ENCODE measurements at regions of chr1 and their contacts with region 1.

Region 1: DNA sequence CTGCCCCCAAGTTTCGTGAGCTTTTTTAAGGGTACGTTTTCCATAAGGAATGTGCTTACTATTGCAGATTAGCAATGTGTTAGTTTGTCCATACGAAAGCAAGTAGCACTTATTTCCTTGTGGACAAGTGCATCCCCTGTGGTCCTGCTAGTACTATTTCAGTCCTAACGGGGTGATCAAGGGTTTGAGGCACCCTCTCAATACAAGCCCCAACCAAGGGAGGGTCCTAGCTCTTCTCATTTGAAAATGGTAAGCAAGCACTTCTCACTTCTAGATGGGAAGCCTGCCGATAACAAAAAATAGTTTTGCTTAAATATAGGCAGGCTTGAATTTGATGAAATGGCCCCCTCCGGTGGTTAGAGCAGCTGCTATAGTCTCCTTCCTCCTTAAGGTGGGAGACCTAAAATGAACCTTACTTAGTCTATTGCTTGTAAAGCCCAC is 64.0 kb upstream of the HMCN1 start:
- DNase-seq: peak; percentile 69
- H3K4me3 Mint-ChIP-seq: no peak overlapping the region
- H3K27ac Mint-ChIP-seq: no peak overlapping the region
- H3K4me1 Mint-ChIP-seq: no peaks in the 10 kb centered on the region
- H3K27me3 Mint-ChIP-seq: no peaks in the 10 kb centered on the region
- CTCF ChIP-seq: peak; percentile 78

Region 2: GRCh38 chr1:185170291-185170848 is 499.8 kb before region 1 on chr1:
- CTCF ChIA-PET with region 1: interaction called, 13 read pairs
- POLR2A ChIA-PET with region 1: no interaction called
- intact Hi-C with region 1: loop called (anchors 2 kb)
- DNase-seq: peak; percentile 84
- H3K4me3 Mint-ChIP-seq: no peak overlapping the region
- H3K27ac Mint-ChIP-seq: no peak overlapping the region
- H3K4me1 Mint-ChIP-seq: no peaks in the 10 kb centered on the region
- H3K27me3 Mint-ChIP-seq: no peaks in the 10 kb centered on the region
- CTCF ChIP-seq: peak; percentile 80

Region 3: DNA sequence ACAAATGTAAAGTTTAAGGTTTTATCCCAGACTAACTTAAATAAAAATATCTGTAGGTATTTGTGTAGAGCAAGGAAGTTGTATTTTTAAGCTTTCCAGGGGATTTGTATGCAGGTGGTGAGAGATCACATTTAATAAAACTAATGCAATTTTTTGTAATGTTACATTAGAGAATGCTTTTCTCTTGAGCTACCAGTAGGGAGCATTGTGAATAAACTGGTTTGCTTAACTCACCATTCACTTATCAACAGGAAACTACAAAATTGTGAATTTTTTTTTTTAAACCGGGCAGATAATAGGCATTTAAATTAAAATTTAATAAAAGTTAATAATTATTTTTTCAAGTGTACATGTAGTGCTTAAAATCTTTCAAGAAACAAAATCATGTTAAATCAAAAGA is 431.8 kb before region 1 on chr1:
- CTCF ChIA-PET with region 1: interaction called, 40 read pairs
- POLR2A ChIA-PET with region 1: interaction called, 10 read pairs
- intact Hi-C with region 1: loop called (anchors 1 kb)
- DNase-seq: peak; percentile 24
- H3K4me3 Mint-ChIP-seq: no peak overlapping the region
- H3K27ac Mint-ChIP-seq: no peak overlapping the region
- H3K4me1 Mint-ChIP-seq: no peaks in the 10 kb centered on the region
- H3K27me3 Mint-ChIP-seq: no peaks in the 10 kb centered on the region
- CTCF ChIP-seq: peak; percentile 25

Region 4: GRCh38 chr1:185291652-185292051 is 378.6 kb before region 1 on chr1:
- CTCF ChIA-PET with region 1: interaction called, 11 read pairs
- POLR2A ChIA-PET with region 1: no interaction called
- intact Hi-C with region 1: no loop called
- DNase-seq: no peak
- H3K4me3 Mint-ChIP-seq: no peak overlapping the region
- H3K27ac Mint-ChIP-seq: no peak overlapping the region
- H3K4me1 Mint-ChIP-seq: no peaks in the 10 kb centered on the region
- H3K27me3 Mint-ChIP-seq: no peaks in the 10 kb centered on the region
- CTCF ChIP-seq: no peak

Region 5: GRCh38 chr1:185566995-185567394 is 103.2 kb before region 1 on chr1:
- CTCF ChIA-PET with region 1: interaction called, 13 read pairs
- POLR2A ChIA-PET with region 1: no interaction called
- intact Hi-C with region 1: no loop called
- DNase-seq: peak; percentile 77
- H3K4me3 Mint-ChIP-seq: no peak overlapping the region
- H3K27ac Mint-ChIP-seq: peak overlapping the region; percentile 96
- H3K4me1 Mint-ChIP-seq: peaks cover 53% of the 10 kb centered on the region
- H3K27me3 Mint-ChIP-seq: no peaks in the 10 kb centered on the region
- CTCF ChIP-seq: no peak

Region 6: GRCh38 chr1:185646202-185646683 is 24.0 kb before region 1 on chr1:
- CTCF ChIA-PET with region 1: interaction called, 67 read pairs
- POLR2A ChIA-PET with region 1: interaction called, 4 read pairs
- intact Hi-C with region 1: no loop called
- DNase-seq: peak; percentile 99
- H3K4me3 Mint-ChIP-seq: peak overlapping the region; percentile 68
- H3K27ac Mint-ChIP-seq: peak overlapping the region; percentile 88
- H3K4me1 Mint-ChIP-seq: peaks cover 29% of the 10 kb centered on the region
- H3K27me3 Mint-ChIP-seq: no peaks in the 10 kb centered on the region
- CTCF ChIP-seq: no peak

Region 7: DNA sequence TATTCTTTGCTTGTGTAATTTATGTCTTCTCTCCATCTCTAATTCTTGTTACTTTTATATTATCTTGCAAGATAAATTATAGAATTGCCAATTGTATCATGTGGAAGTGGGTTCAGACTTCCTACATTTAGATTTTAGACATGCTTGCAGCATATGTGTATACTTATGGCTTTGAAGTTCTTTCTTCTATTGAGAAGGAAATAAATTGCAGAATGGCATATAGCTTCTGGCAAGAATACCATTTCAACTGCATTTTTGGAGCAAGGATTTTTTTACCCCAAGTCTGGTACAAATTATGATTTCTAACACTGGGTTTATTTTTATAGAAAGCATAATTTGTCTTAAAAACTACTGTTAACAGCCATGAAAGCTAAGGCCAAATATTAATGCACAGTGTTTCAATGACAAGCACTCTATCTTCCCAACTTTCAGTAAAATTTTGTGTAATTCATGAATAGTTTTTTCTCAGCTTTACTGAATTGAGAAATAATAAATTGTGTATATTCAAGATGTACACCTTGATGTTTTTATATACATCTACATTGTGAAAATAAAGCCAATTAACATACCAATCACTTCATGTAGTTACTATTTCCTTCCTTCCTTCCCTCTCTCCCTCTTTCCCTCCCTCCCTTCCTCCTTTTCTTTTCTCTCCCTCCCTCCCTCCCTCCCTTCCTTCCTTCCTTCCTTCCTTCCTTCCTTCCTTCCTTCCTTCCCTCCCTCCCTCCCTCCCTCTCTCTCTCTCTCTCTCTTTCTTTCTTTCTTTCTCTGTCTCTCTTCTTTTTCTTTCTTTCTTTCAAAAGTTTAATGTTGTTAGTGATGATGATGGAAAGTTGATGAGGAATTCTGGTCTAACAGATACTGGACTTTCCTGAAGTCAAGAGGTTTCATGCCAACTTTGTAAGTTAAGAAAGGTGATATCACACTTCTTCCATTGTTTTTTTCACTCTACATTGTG is 16.9 kb after region 1 on chr1:
- CTCF ChIA-PET with region 1: interaction called, 72 read pairs
- POLR2A ChIA-PET with region 1: no interaction called
- intact Hi-C with region 1: no loop called
- DNase-seq: no peak
- H3K4me3 Mint-ChIP-seq: no peak overlapping the region
- H3K27ac Mint-ChIP-seq: no peak overlapping the region
- H3K4me1 Mint-ChIP-seq: no peaks in the 10 kb centered on the region
- H3K27me3 Mint-ChIP-seq: no peaks in the 10 kb centered on the region
- CTCF ChIP-seq: no peak

Region 8: DNA sequence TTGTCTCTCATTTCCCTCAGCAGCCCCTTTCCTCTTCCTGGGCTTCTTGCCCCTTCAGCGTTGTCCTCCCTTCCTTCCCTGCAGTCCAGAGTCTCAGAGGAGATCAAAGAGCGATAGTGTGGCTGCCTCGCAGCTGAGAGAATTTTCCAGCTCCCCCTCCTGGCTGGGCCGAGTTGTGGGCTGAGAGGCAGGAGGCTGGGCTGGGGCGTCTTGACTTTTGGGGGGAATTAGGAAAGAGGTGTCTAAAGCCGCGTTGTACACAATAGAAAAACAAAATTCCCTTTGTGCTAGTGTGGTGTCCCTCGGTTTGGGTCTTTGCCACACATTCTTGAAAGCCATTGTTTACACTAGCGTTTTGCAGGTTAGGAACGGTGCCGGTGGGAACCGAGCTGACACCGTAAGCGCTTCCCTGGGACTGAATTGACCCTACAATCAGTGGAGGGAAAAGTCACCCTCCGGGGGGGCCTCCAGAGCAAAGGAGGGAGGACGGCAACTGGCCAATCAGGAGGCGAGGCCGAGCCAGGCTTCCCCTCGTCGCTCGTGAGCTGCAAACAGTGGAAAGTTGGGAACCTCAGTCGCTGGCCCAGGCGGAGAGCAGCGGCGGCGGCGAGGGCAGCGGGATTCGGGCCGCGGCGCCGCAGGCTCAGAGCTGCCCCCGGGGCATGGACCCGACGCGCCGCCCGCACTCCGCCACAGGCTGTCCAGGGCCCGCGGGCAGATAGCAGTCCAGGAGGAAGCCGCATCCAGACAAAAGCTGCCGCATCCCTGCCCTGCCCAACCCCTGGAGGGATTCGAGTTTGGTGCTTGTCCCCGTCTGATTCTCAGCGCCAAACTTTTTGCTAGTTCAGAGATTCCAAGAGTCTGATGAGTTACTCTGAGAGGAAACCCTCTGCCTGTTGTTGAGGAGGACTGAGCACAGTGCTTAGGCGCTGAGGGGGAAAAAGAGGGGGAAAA is 63.9 kb after region 1 on chr1 and contains the start of gene HMCN1:
- CTCF ChIA-PET with region 1: no interaction called
- POLR2A ChIA-PET with region 1: no interaction called
- intact Hi-C with region 1: no loop called
- DNase-seq: peak; percentile 66
- H3K4me3 Mint-ChIP-seq: peak within 1 kb of the TSS; percentile 70
- H3K27ac Mint-ChIP-seq: no peak within 1 kb of the TSS
- H3K4me1 Mint-ChIP-seq: peaks cover 7% of the 10 kb centered on the region
- H3K27me3 Mint-ChIP-seq: no peaks in the 10 kb centered on the region
- CTCF ChIP-seq: no peak
- total RNA-seq, gene HMCN1: 0.07 and 0.12 TPM in 2 replicates

Region 9: GRCh38 chr1:185790194-185790735 is 120.1 kb after region 1 on chr1:
- CTCF ChIA-PET with region 1: no interaction called
- POLR2A ChIA-PET with region 1: no interaction called
- intact Hi-C with region 1: no loop called
- DNase-seq: peak; percentile 42
- H3K4me3 Mint-ChIP-seq: no peak overlapping the region
- H3K27ac Mint-ChIP-seq: peak overlapping the region; percentile 2
- H3K4me1 Mint-ChIP-seq: peaks cover 6% of the 10 kb centered on the region
- H3K27me3 Mint-ChIP-seq: no peaks in the 10 kb centered on the region
- CTCF ChIP-seq: no peak